Common myeloid progenitor, CD34-positive (primary cell): ENCODE measurements at regions of chr6 and their contacts with region 1.

Region 1: DNA sequence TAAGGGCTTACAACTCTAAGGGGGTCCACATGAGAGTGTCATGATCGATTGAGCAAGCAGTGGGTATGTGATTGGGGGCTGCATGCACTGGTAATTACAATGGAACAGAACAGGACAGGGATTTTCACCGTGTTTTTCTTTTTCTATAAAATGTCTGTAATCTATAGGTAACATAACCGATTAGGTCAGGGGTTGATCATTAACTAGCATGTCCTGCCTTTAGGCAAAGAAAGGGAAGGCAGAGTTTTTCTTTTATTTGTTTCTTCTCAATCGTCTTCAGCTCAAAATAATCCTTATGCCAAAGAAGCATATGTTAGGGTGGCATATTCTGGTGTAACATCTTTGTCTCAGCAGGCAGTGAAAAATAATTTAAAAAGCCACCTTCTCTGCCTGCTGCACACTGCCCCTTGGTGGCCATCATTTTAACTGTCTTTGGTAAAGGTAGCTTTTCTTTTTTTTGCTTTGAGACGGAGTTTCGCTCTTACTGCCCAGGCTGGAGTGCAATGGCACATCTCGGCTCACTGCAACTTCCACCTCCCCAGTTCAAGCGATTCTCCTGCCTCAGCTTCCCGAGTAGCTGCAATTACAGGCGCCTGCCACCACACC is 9.7 kb upstream of the CEP43 start:
- DNase-seq: peak; percentile 45 to 79 (median 77)
- H3K4me3 ChIP-seq: no peak overlapping the region
- H3K27ac ChIP-seq: no peak overlapping the region
- H3K4me1 ChIP-seq: peaks cover 0 to 4% (median 0%) of the 10 kb centered on the region in 4 experiments
- H3K27me3 ChIP-seq: peaks cover 0 to 2% (median 0%) of the 10 kb centered on the region in 5 experiments

Region 2: GRCh38 chr6:166721576-166721975 is 268.0 kb before region 1 on chr6:
- CTCF ChIA-PET with region 1: no interaction called
- POLR2A ChIA-PET with region 1: no interaction called
- DNase-seq: no peak
- H3K4me3 ChIP-seq: no peak overlapping the region
- H3K27ac ChIP-seq: no peak overlapping the region
- H3K4me1 ChIP-seq: peaks cover 0 to 10% (median 2%) of the 10 kb centered on the region in 4 experiments
- H3K27me3 ChIP-seq: no peaks in the 10 kb centered on the region

Region 3: DNA sequence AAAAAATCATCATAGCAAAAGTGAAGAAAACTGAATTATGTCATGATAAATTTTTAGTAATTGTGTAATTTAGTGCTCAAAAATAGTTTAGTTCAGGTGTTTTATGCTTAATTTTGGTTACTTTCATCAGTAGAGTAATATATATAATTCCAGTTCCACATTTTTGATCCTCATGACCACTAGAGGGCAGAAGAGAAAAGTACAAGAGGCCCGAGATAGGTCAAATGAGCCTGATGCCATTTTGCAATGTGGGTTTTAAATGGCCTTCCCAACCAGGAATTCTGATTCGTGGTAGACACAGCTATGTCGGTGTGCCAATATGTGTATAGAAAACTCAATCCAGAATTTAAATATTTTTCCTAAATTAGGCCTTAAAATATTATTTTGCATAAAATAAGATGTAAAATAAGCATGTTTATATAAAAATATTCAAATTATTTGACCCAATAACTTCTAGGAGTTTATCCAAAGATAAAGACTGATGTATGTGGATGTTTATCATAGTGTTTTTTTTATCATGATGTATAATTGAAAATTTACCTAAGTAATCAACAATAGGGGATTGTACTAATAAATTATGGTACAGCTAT is 202.7 kb before region 1 on chr6:
- CTCF ChIA-PET with region 1: interaction called, 44 read pairs
- POLR2A ChIA-PET with region 1: no interaction called
- DNase-seq: peak; percentile 63 to 78 (median 73)
- H3K4me3 ChIP-seq: no peak overlapping the region
- H3K27ac ChIP-seq: no peak overlapping the region
- H3K4me1 ChIP-seq: no peaks in the 10 kb centered on the region
- H3K27me3 ChIP-seq: peaks cover 0 to 2% (median 0%) of the 10 kb centered on the region in 5 experiments

Region 4: GRCh38 chr6:166956444-166957086 is 33.0 kb before region 1 on chr6 and contains the start of gene RNASET2:
- CTCF ChIA-PET with region 1: interaction called, 86 read pairs
- POLR2A ChIA-PET with region 1: interaction called, 5 read pairs
- DNase-seq: peak; percentile 87 to 92 (median 91)
- H3K4me3 ChIP-seq: peak within 1 kb of the TSS; percentile 72 to 91 (median 84)
- H3K27ac ChIP-seq: peak within 1 kb of the TSS; percentile 50 to 81
- H3K4me1 ChIP-seq: peaks cover 24 to 49% (median 43%) of the 10 kb centered on the region in 4 experiments
- H3K27me3 ChIP-seq: peaks cover 0 to 31% (median 0%) of the 10 kb centered on the region in 5 experiments

Region 5: DNA sequence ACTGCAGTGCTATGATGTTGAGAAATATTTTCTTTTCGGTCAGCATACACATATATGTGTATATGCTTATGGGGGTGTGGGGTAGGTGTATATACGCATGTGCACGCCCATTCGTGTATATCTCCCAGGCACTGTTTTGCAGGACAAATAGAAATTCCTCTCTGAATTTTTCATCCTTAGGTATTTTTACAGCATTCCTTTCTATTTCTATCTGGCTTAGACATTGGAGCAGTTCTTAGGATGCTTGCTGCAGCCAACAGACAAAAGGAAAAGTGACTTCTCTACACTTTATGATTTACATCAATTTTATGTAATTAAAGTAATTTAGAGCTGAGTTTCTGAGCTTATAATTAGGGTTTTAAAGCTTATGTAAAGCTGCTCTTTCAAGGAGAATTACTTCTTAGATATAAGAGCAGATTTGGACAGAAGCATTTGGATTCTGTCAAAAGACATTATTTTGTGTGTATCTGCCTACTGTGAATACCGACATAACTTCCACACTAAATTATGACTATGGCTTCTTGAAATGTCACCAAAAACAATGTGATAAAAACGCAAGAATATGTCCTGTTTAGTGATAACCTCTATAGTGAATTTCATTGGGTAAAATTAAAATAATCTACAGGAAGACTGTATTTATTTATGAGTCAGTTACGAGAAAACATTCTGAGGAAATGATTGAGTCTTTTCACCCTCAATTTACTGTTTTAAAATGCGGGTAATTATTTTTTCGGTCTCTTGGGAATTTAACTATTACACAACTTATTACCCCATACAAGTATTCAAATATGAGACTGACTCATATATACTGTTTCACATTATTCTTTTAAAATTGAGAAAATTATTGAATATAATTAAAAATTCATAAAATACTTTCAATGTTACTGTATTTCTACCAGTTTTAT is 11.7 kb before region 1 on chr6:
- CTCF ChIA-PET with region 1: interaction called, 34 read pairs
- POLR2A ChIA-PET with region 1: no interaction called
- DNase-seq: no peak
- H3K4me3 ChIP-seq: no peak overlapping the region
- H3K27ac ChIP-seq: no peak overlapping the region
- H3K4me1 ChIP-seq: no peaks in the 10 kb centered on the region
- H3K27me3 ChIP-seq: peaks cover 0 to 23% (median 0%) of the 10 kb centered on the region in 5 experiments

Region 6: GRCh38 chr6:167122041-167122826 is 132.7 kb after region 1 on chr6:
- CTCF ChIA-PET with region 1: interaction called, 12 read pairs
- POLR2A ChIA-PET with region 1: no interaction called
- DNase-seq: no peak
- H3K4me3 ChIP-seq: no peak overlapping the region
- H3K27ac ChIP-seq: no peak overlapping the region
- H3K4me1 ChIP-seq: peaks cover 0 to 63% (median 24%) of the 10 kb centered on the region in 4 experiments
- H3K27me3 ChIP-seq: no peaks in the 10 kb centered on the region

Region 7: DNA sequence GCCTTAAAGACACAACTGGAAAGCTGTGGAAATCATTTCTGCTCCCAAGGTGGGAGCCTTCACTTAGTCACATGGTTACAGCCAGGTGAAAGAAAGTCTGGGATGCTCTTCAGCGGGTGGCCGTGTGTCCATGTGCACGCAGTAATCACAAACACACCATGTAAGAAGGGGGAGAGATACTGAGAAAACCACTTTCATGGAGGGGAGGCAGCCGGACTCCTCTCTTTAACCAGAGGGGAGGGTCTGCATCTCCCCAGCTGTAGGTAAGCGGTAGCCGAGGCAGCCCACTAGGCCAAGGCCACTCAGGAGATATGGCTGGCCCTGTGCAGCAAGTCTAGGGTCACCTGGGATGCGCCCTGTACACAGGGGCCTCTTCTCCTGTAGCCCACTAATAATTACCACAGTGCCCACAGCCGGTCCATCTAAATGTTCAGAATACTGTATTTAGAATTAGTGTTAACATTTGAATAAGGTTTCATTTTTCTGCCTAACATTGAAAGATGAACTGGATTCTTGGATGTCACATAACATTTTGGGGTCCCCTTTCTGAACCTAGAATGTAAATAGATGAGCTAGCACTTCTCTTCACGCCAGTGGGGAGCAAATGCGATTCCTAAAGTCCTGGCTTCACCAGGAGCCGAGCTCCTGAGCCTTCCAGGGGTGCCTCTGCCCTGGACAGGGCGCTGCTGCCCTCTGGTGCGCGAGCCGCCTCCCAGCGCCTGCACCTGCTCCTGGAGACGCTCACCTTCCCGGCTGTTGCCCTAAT is 152.3 kb after region 1 on chr6:
- CTCF ChIA-PET with region 1: interaction called, 18 read pairs
- POLR2A ChIA-PET with region 1: no interaction called
- DNase-seq: peak; percentile 47 to 54 (median 51)
- H3K4me3 ChIP-seq: no peak overlapping the region
- H3K27ac ChIP-seq: no peak overlapping the region
- H3K4me1 ChIP-seq: peaks cover 0 to 10% (median 7%) of the 10 kb centered on the region in 4 experiments
- H3K27me3 ChIP-seq: no peaks in the 10 kb centered on the region